Activated CD4-positive, alpha-beta memory T cell treated with anti-CD3 and anti-CD28 coated beads for 36 hours (primary cell): ENCODE measurements at regions of chr21 and their contacts with region 1.

Region 1: DNA sequence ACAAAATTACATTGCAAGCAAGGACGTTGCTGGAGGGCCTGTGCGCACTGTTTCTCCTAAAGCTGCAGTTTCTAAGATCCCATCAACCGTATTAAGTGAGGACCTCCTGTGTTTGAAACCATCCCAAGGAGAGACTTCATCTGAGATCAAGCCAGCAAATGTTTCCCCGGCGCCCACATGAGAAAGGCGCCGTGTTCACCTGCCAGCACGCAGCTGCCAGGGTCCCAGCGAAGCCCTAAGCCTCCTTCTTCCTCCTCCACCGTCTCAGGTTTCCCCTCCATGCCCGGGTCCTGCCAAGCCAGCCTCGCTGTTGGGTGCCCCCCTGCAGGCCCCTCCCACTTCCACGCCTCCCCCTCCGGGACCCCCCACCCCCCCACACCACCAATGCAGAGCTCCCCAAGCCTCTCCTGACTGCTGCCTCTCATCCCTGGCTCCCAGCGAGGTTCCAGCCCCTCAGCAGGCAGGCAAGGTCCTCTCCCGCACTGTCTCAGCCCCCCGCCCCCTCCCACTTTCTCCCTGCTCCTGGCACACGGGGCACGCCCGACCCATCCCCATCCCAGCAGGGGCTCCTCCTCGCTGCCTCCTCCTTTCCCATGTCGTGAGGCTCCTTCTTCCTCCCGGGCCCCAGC is 8.6 kb upstream of the TFF1 start:
- DNase-seq: peak; percentile 51
- H3K4me3 Mint-ChIP-seq: peak overlapping the region; percentile 63
- H3K27ac Mint-ChIP-seq: peak overlapping the region; percentile 95
- H3K4me1 Mint-ChIP-seq: peaks cover 33% of the 10 kb centered on the region
- H3K27me3 Mint-ChIP-seq: no peaks in the 10 kb centered on the region

Region 2: GRCh38 chr21:42164064-42164789 is 210.8 kb before region 1 on chr21:
- CTCF ChIA-PET with region 1: no interaction called
- POLR2A ChIA-PET with region 1: no interaction called
- intact Hi-C with region 1: no loop called
- DNase-seq: peak; percentile 76
- H3K4me3 Mint-ChIP-seq: no peak overlapping the region
- H3K27ac Mint-ChIP-seq: no peak overlapping the region
- H3K4me1 Mint-ChIP-seq: peaks cover 13% of the 10 kb centered on the region
- H3K27me3 Mint-ChIP-seq: no peaks in the 10 kb centered on the region

Region 3: DNA sequence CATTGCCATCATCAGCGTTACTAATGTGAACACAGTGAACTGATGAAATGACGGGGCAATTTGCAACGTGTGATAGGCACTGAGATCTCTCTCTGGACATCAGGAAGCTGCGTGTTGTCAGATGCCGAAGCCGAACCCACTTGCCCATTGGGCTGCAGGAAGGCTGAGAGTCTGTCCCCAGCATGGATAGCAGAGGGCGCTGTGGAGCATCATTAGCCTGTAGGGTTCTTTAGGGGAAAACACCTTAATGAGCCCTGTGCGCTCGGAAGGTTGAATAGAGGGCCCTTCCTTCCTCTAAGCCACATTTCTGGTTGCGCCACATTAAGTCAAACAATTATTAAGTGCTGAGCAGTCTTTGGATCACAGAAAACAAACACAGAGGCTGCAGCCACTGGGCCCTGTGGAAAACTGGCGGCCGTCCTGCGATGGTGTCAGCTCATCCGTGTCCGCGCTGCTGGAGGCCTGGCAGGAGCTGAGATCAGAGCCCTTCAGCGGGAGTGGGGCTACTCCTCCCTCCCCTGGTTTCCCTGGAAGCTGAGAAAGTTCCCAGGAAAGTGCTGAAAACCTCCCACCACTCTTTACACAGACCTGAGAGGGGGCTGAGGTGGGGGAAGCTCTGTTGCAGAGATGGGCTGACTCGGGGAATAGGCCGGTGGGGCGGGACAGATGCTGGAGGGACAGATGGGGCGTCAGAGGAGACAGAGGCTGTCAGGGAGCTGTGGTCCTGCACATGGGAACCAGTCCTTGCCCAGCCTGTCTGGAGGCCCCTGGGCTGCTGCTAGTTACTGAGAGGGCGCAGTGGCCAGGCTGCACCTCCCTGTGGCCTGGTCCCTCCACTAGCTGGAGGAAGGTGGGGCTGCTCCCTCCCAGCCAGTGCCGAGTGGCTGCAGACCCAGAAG is 36.9 kb before region 1 on chr21:
- CTCF ChIA-PET with region 1: interaction called, 6 read pairs
- POLR2A ChIA-PET with region 1: interaction called, 6 read pairs
- intact Hi-C with region 1: loop called (anchors 1 kb)
- DNase-seq: peak; percentile 87
- H3K4me3 Mint-ChIP-seq: no peak overlapping the region
- H3K27ac Mint-ChIP-seq: no peak overlapping the region
- H3K4me1 Mint-ChIP-seq: peaks cover 23% of the 10 kb centered on the region
- H3K27me3 Mint-ChIP-seq: peaks cover 11% of the 10 kb centered on the region

Region 4: GRCh38 chr21:42460391-42461204 is 85.6 kb after region 1 on chr21:
- CTCF ChIA-PET with region 1: no interaction called
- POLR2A ChIA-PET with region 1: no interaction called
- intact Hi-C with region 1: no loop called
- DNase-seq: peak; percentile 62
- H3K4me3 Mint-ChIP-seq: no peak overlapping the region
- H3K27ac Mint-ChIP-seq: peak overlapping the region; percentile 63
- H3K4me1 Mint-ChIP-seq: peaks cover 60% of the 10 kb centered on the region
- H3K27me3 Mint-ChIP-seq: no peaks in the 10 kb centered on the region

Region 5: DNA sequence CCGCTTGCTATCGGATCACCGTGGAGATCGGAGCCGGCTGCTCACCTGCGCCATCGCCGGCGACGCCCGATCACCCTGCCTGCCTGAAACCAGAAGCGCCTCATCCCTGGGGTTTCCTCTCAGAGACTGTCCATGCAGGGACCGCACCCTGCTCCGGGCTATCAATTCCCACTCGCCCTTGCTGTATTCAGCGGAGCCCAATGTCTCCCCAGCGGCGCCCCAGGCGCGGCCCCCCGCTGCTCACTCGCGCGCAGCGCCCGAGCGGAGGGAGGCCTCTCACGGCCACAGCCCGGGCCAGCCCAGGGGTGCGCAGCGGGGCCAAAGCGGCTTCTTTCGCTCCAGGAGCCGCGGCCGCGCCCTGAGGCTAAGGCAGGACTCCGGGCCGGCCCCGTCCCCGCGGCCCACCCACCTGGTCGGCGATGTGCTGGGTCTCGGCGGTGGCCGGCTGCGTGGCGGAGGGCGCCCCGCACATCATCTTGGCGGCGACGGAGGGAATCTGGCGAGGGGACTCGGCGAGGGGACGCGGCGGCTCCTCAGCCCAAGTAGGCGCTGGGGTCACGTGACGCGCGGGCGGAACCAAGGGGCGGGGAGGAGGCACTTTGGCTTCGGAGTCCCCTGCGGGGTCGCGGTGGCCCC is 1400.9 kb after region 1 on chr21 and contains the start of gene CSTB:
- CTCF ChIA-PET with region 1: no interaction called
- POLR2A ChIA-PET with region 1: no interaction called
- intact Hi-C with region 1: no loop called
- DNase-seq: peak; percentile 89
- H3K4me3 Mint-ChIP-seq: peak within 1 kb of the TSS; percentile 89
- H3K27ac Mint-ChIP-seq: peak within 1 kb of the TSS; percentile 70
- H3K4me1 Mint-ChIP-seq: peaks cover 38% of the 10 kb centered on the region
- H3K27me3 Mint-ChIP-seq: no peaks in the 10 kb centered on the region
- total RNA-seq, gene CSTB: 40.1 to 42.3 TPM